IMR-90 (cell line): ENCODE measurements at regions of chr3 and their contacts with region 1.

Region 1: DNA sequence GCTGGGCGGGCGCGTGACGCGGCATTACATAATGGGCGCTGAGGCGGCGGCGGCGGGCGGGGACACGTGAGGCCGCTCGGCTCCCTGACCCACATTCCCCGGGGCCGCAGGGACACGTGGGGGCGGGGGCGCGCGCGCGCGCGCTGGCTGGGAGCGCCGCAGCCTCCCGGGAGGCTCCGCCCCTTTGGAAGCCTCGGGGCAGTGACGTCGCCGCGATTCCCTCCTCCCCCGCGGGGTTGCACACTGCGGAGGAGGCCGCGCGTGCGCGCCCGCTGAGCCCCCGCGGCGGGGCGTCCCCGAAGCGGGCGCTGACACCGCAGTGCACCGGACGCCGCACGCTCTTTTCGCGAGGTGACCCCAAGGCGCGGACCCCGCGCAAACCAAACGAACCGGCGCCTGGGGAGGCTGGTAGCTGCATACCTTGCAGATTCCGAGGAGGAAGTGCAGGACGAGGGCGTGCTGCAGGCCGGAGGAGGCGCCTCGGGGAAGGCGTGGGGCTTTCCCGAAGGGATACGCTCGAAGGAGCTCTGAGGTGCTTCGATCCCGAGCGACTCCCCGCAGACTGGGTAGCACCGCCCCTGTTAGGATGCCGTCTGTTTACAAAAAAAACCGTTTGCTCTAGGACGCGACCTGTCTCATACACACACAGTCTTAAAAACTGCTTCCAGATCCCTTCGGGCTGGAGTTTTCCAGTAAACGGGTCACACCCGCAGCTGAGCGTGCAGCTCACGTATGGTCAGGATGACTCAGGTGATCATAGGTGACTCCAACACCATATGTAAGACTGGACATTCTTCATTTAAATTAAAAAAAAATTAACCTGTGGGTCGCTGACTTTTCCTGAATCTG is 1.0 kb downstream of the NR1D2 start:
- DNase-seq: peak; percentile 93
- ATAC-seq: peak; percentile 84
- H3K4me3 ChIP-seq: peak overlapping the region; percentile 88
- H3K27ac ChIP-seq: peak overlapping the region; percentile 61
- H3K4me1 ChIP-seq: peaks cover 13% of the 10 kb centered on the region
- H3K27me3 ChIP-seq: no peaks in the 10 kb centered on the region
- CTCF ChIP-seq: no peak
- POLR2A ChIP-seq: peak; percentile 60
- RAD21 ChIP-seq: no peak

Region 2: DNA sequence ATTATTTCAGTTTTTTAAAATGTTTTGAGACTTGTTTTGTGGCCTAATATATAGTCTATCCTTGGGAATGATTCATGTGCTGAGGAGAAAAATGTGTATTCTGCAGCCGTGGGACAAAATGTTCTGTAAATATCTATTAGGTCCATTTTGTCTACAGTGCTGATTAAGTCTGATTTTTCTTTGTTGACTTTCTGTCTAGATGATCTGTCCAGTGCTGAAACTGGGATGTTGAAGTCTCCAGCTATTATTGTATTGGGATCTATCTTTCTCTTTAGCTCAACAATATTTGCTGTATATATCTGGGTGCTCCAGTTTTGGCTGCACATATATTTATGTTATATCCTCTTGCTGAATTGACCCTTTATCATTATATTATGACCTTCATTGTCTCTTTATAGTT is 657.8 kb before region 1 on chr3:
- CTCF ChIA-PET with region 1: no interaction called
- POLR2A ChIA-PET with region 1: no interaction called
- dilution Hi-C with region 1: no loop called
- in situ Hi-C with region 1: no loop called
- intact Hi-C with region 1: loop called (anchors 10 kb)
- DNase-seq: peak; percentile 20
- ATAC-seq: no peak
- H3K4me3 ChIP-seq: no peak overlapping the region
- H3K27ac ChIP-seq: no peak overlapping the region
- H3K4me1 ChIP-seq: no peaks in the 10 kb centered on the region
- H3K27me3 ChIP-seq: no peaks in the 10 kb centered on the region
- CTCF ChIP-seq: no peak
- POLR2A ChIP-seq: no peak
- RAD21 ChIP-seq: no peak

Region 3: DNA sequence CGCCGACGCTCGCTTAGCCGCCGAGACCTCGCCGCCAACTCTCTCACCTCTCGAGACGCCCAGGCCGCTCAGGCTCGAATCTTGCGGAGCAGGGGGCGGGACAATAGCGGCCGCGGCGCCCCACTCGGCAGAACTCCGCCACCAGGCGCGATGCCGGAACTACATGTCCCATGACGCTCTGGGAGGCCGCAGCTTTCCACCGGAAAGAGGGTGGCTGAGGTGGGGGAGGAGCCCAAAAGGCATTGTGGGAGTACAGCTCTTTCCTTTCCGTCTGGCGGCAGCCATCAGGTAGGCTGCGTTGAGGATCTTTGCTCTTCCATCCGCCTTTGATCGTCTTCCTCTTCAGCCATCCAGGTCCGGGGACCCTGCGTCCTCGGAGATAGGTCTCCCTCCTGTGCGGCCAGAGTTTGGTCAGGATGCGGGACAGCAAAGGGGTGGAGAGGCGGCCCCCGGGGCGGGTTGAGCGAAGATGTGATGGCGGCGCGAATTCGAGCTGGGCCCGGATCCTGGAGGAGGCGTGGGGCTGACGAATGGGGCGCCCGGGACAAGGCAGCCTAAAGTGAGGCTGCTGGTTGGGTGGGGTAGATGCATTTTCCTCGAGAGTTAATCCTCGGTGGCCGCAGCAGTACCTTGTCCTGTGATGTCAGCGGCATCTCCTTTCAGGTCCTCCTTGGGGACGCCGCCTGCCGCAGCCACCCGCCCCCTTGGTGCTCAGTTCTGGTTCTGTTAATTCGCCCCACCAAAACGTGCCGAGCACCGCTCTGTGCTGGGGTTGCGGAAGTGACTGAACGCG is 29.0 kb before region 1 on chr3 and contains the starts of genes NKIRAS1 and RPL15:
- CTCF ChIA-PET with region 1: no interaction called
- POLR2A ChIA-PET with region 1: interaction called, 5 read pairs
- dilution Hi-C with region 1: no loop called
- in situ Hi-C with region 1: no loop called
- intact Hi-C with region 1: loop called (anchors 1 kb)
- DNase-seq: peak; percentile 96
- ATAC-seq: peak; percentile 95
- H3K4me3 ChIP-seq: peak within 1 kb of the TSS; percentile 57
- H3K27ac ChIP-seq: peak within 1 kb of the TSS; percentile 81
- H3K4me1 ChIP-seq: no peaks in the 10 kb centered on the region
- H3K27me3 ChIP-seq: no peaks in the 10 kb centered on the region
- CTCF ChIP-seq: peak; percentile 27
- POLR2A ChIP-seq: peak; percentile 99
- RAD21 ChIP-seq: no peak
- total RNA-seq, gene NKIRAS1: 6.8 and 16.1 TPM in 2 replicates
- total RNA-seq, gene RPL15: 1,419 and 2,730 TPM in 2 replicates

Region 4: GRCh38 chr3:23959135-23959900 is 13.2 kb after region 1 on chr3:
- CTCF ChIA-PET with region 1: no interaction called
- POLR2A ChIA-PET with region 1: no interaction called
- dilution Hi-C with region 1: no loop called
- in situ Hi-C with region 1: no loop called
- intact Hi-C with region 1: no loop called
- DNase-seq: peak; percentile 95
- ATAC-seq: peak; percentile 89
- H3K4me3 ChIP-seq: no peak overlapping the region
- H3K27ac ChIP-seq: peak overlapping the region; percentile 53; the same call in 1 of the 2 replicates
- H3K4me1 ChIP-seq: peaks cover 8% of the 10 kb centered on the region
- H3K27me3 ChIP-seq: no peaks in the 10 kb centered on the region
- CTCF ChIP-seq: no peak
- POLR2A ChIP-seq: no peak
- RAD21 ChIP-seq: no peak